Activated CD4-positive, alpha-beta memory T cell treated with anti-CD3 and anti-CD28 coated beads for 36 hours (primary cell): ENCODE measurements at regions of chr10 and their contacts with region 1.

Region 1: DNA sequence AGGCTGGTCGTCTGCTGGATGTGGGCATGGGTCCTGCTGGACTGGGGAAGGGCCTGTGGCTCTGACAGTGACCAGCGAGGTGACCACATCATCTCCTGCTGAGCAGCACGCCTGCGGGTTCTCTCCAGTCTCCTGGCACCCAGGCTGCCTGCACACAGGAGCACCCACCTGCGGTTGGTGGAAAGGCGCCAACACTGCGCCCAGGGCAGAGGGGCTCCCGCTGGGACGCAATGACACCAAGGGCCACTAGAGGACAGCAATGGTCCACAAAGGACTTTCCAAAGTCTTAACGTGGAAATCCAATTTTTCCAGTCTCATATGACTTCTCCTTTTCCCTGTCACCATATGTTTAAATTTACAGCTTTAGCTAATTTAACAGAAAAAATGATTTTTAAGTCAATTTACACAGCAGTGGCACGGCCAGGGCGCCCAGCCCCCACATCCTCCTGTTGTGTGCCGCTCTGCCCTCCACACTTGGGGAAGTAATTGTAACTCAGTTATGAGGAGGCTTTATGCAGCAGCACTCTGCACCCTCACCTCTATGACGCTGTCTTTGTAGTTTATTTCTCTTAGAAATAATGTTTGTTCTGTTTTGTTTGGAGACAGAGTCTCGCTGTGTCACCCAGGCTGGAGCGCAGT is 38.1 kb downstream of the CFAP46 start:
- DNase-seq: peak; percentile 60
- H3K4me3 Mint-ChIP-seq: no peak overlapping the region
- H3K27ac Mint-ChIP-seq: no peak overlapping the region
- H3K4me1 Mint-ChIP-seq: peaks cover 13% of the 10 kb centered on the region
- H3K27me3 Mint-ChIP-seq: no peaks in the 10 kb centered on the region

Region 2: DNA sequence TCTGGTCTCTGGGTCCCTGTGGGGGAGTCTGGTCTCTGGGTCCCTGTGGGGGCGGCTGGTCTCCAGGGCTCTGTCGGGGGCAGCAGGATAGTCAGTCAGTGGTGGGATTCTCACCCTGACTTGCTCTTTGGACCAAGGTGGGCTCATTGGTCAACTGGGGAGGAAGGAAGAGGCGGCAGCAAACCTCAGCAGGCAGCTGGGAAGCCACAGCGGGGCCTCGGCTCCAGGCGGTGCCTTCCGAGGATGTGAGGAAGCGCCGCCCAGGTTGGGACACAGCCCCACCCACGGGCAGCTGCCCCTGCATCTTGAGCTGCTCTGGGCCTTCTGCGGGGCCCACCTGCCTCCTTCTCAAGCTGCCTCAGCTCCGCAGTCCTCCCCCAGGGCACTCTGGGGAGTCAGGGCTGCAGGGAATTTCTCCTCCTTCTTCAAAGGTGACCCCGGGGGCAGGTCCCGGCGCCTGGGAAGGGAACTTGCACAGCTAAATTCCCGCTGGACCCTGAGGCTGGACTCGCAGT is 235.3 kb after region 1 on chr10:
- CTCF ChIA-PET with region 1: interaction called, 11 read pairs
- POLR2A ChIA-PET with region 1: no interaction called
- intact Hi-C with region 1: no loop called
- DNase-seq: peak; percentile 8
- H3K4me3 Mint-ChIP-seq: no peak overlapping the region
- H3K27ac Mint-ChIP-seq: no peak overlapping the region
- H3K4me1 Mint-ChIP-seq: peaks cover 3% of the 10 kb centered on the region
- H3K27me3 Mint-ChIP-seq: peaks cover 8% of the 10 kb centered on the region